ENCODE measurements at regions of chr3 and their contacts with region 1.

Region 1: DNA sequence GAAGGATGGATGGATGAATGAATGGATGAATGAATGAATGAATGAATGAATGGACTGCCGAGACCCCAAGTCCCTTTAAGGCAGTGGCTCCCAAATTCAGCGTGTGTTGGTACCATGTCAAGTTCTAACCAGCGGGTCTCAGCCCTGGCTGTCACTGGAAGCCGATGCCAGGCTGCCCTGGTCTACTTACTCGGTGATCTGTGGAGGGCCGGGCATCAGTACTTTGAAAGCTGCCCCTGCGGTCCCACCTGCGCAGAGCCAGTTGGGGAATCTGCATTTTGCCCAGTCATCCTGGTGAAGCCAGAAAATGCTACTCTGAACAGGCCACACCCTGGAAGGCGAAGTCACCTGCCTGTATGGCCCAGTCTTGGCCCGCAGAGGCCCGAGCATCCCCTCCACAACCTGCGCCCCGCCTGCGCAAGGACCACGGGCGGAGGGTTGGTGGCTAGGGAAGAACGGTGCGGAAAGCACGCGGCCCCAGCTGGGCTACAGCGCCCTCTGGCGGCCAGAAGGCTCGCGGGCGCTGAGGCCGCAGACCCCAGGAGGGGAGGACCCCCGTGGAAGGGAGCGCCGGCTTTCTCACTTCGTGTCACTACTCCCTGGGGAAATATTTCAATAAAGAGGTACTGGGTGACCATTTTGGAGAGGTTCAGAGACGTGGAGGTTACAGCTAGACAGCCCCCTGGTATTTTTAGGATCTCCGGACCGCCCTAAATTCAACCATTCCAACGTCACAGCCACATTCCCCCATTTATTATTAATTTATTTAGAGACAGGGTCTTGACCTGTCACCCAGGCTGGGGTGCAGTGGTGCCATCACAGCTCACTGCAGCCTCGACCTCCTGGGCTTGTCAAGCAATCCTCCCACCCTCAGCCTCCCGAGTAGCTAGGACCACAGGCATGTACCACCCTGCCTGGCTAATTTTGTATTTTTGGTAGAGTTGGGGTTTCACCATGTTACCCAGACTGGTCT is 34.9 kb downstream of the PRKCD start:
- H3K4me3 ChIP-seq: no peak overlapping the region
- H3K27ac ChIP-seq: no peak overlapping the region
- H3K4me1 ChIP-seq: no peaks in the 10 kb centered on the region
- CTCF ChIP-seq: peak; percentile 74

Region 2: GRCh38 chr3:53114011-53114400 is 81.9 kb before region 1 on chr3:
- CTCF ChIA-PET with region 1: interaction called, 46 read pairs
- POLR2A ChIA-PET with region 1: no interaction called
- H3K4me3 ChIP-seq: no peak overlapping the region
- H3K27ac ChIP-seq: no peak overlapping the region
- H3K4me1 ChIP-seq: no peaks in the 10 kb centered on the region
- CTCF ChIP-seq: peak; percentile 77; the same call in 1 of the 2 replicates

Region 3: GRCh38 chr3:53130179-53131061 is 65.5 kb before region 1 on chr3 and contains the start of gene RFT1:
- CTCF ChIA-PET with region 1: interaction called, 54 read pairs
- POLR2A ChIA-PET with region 1: interaction called, 4 read pairs
- H3K4me3 ChIP-seq: peak within 1 kb of the TSS; percentile 99
- H3K27ac ChIP-seq: peak within 1 kb of the TSS; percentile 74
- H3K4me1 ChIP-seq: no peaks in the 10 kb centered on the region
- CTCF ChIP-seq: peak; percentile 64

Region 4: GRCh38 chr3:53375019-53375418 is 179.1 kb after region 1 on chr3:
- CTCF ChIA-PET with region 1: no interaction called
- POLR2A ChIA-PET with region 1: no interaction called
- H3K4me3 ChIP-seq: no peak overlapping the region
- H3K27ac ChIP-seq: no peak overlapping the region
- H3K4me1 ChIP-seq: no peaks in the 10 kb centered on the region
- CTCF ChIP-seq: peak; percentile 53; the same call in 1 of the 2 replicates